Upper lobe of right lung (tissue), 1 donor: ENCODE measurements at regions of chr15 and their contacts with region 1.

Region 1: GRCh38 chr15:88904624-88905327 is 8.4 kb downstream of the MFGE8 start:
- DNase-seq: peak; percentile 89
- ATAC-seq: peak; percentile 89
- H3K4me3 ChIP-seq: no peak overlapping the region
- H3K27ac ChIP-seq: no peak overlapping the region
- H3K4me1 ChIP-seq: peaks cover 9% of the 10 kb centered on the region
- H3K27me3 ChIP-seq: no peaks in the 10 kb centered on the region
- CTCF ChIP-seq: peak; percentile 100

Region 2: GRCh38 chr15:89017370-89018066 is 112.7 kb after region 1 on chr15:
- intact Hi-C with region 1: loop called (anchors 10 kb)
- DNase-seq: peak; percentile 85
- ATAC-seq: peak; percentile 85
- H3K4me3 ChIP-seq: peak overlapping the region; percentile 21
- H3K27ac ChIP-seq: peak overlapping the region; percentile 42
- H3K4me1 ChIP-seq: peaks cover 44% of the 10 kb centered on the region
- H3K27me3 ChIP-seq: no peaks in the 10 kb centered on the region
- CTCF ChIP-seq: peak; percentile 71

Region 3: DNA sequence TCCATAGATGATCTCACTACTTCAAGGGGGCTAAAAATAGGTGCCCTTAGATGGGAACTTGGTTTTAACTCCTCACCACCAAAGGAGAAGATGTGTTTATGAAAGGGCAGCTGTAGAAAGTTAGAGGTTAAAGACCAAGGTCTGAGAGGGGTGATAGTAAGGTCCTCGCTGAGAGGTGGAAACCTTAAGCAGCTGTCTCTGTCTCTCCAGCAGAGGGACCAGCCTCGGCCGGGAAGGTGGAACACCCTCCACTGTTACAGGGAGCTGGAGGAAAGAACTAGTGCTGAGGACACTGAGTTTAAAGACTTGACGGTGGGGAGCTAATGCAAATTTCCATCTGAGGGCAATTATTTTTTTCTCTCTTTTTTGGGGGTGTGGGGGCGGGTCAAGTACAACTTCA is 325.5 kb after region 1 on chr15:
- intact Hi-C with region 1: no loop called
- DNase-seq: no peak
- ATAC-seq: no peak
- H3K4me3 ChIP-seq: no peak overlapping the region
- H3K27ac ChIP-seq: no peak overlapping the region
- H3K4me1 ChIP-seq: no peaks in the 10 kb centered on the region
- H3K27me3 ChIP-seq: no peaks in the 10 kb centered on the region
- CTCF ChIP-seq: no peak